ENCODE measurements at regions of chr11 and their contacts with region 1.

Region 1: DNA sequence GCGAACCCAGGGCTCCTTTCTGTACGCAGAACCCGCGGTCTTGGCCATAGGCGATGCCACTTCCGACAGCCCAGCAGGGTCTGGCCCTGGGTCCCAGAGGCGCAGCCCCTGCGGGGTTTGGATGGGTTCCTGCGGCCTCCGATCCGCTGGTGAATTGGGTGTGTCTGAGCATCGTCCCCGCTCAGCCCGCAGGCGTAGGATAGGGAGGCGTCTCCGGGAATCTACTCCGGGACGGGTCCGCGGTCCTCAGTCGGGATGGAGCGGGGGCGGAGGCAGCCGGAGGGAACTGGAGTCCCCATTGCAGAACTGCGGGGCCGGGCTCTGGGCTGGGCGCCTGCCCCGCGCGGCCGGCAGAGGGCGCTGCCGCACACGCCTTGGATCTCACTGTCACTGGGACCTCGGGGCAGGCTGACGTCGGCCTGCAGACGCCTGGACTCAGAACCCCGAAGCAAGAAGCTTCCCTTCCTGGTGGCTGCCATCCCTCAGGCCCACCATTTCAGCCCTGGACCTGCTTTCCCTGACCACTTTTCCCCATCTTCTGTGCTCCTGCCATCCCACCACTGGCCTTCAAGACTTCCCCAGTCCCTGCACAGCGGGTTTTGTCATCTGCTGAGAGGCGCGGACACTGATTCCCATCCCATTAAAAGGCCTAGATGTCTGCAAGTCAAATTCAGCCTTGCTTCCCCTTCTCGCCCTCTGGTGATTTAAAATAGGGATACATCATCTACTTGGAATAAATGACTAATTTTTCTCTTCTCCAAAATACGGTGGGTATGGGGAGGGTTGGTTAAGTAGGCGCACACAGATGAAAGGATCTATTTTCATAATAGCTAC is 38.3 kb upstream of the CREB3L1 start:
- DNase-seq: peak; percentile 96
- H3K4me3 ChIP-seq: peak overlapping the region; percentile 27 to 68 (median 50)
- H3K27ac ChIP-seq: peak overlapping the region; percentile 55 to 93 (median 89)
- H3K4me1 ChIP-seq: peaks cover 16 to 61% (median 48%) of the 10 kb centered on the region in 6 donors
- H3K27me3 ChIP-seq: peaks cover 0 to 35% (median 17%) of the 10 kb centered on the region in 7 donors
- CTCF ChIP-seq: peak; percentile 94 to 100 (median 100)
- POLR2A ChIP-seq: no peak

Region 2: GRCh38 chr11:46121724-46122477 is 117.3 kb before region 1 on chr11:
- intact Hi-C with region 1: loop called (anchors 10 kb)
- DNase-seq: peak; percentile 93
- H3K4me3 ChIP-seq: peak overlapping the region; percentile 69 to 99 (median 87)
- H3K27ac ChIP-seq: peak overlapping the region; percentile 62 to 98 (median 96)
- H3K4me1 ChIP-seq: peaks cover 22 to 44% (median 36%) of the 10 kb centered on the region in 6 donors
- H3K27me3 ChIP-seq: no peaks in the 10 kb centered on the region
- CTCF ChIP-seq: no peak
- POLR2A ChIP-seq: peak in 1 of 3 donors; percentile 66

Region 3: GRCh38 chr11:46308631-46309419 is 69.6 kb after region 1 on chr11:
- intact Hi-C with region 1: loop called (anchors 5 kb)
- DNase-seq: peak; percentile 89
- H3K4me3 ChIP-seq: no peak overlapping the region
- H3K27ac ChIP-seq: no peak overlapping the region
- H3K4me1 ChIP-seq: peaks cover 0 to 18% (median 6%) of the 10 kb centered on the region in 6 donors
- H3K27me3 ChIP-seq: peaks cover 0 to 18% (median 0%) of the 10 kb centered on the region in 7 donors
- CTCF ChIP-seq: peak; percentile 59 to 89 (median 80)
- POLR2A ChIP-seq: no peak